MCF 10A (cell line): ENCODE measurements at regions of chr1 and their contacts with region 1.

Region 1: GRCh38 chr1:209815931-209816341 is 10.0 kb upstream of the IRF6 start:
- DNase-seq: peak; percentile 100
- H3K4me3 Mint-ChIP-seq: peak overlapping the region; percentile 44
- H3K27ac Mint-ChIP-seq: peak overlapping the region; percentile 91
- H3K4me1 Mint-ChIP-seq: peaks cover 29% of the 10 kb centered on the region
- H3K27me3 Mint-ChIP-seq: no peaks in the 10 kb centered on the region
- CTCF ChIP-seq: no peak

Region 2: GRCh38 chr1:208942394-208943130 is 873.4 kb before region 1 on chr1:
- CTCF ChIA-PET with region 1: no interaction called
- POLR2A ChIA-PET with region 1: no interaction called
- intact Hi-C with region 1: no loop called
- DNase-seq: peak; percentile 32
- H3K4me3 Mint-ChIP-seq: no peak overlapping the region
- H3K27ac Mint-ChIP-seq: no peak overlapping the region
- H3K4me1 Mint-ChIP-seq: no peaks in the 10 kb centered on the region
- H3K27me3 Mint-ChIP-seq: no peaks in the 10 kb centered on the region
- CTCF ChIP-seq: no peak

Region 3: GRCh38 chr1:209790286-209791193 is 25.4 kb before region 1 on chr1:
- CTCF ChIA-PET with region 1: interaction called, 263 read pairs
- POLR2A ChIA-PET with region 1: interaction called, 67 read pairs
- intact Hi-C with region 1: no loop called
- DNase-seq: peak; percentile 32
- H3K4me3 Mint-ChIP-seq: no peak overlapping the region
- H3K27ac Mint-ChIP-seq: no peak overlapping the region
- H3K4me1 Mint-ChIP-seq: peaks cover 6% of the 10 kb centered on the region
- H3K27me3 Mint-ChIP-seq: no peaks in the 10 kb centered on the region
- CTCF ChIP-seq: no peak

Region 4: GRCh38 chr1:209797978-209798639 is 17.8 kb before region 1 on chr1:
- CTCF ChIA-PET with region 1: interaction called, 263 read pairs
- POLR2A ChIA-PET with region 1: interaction called, 94 read pairs
- intact Hi-C with region 1: no loop called
- DNase-seq: peak; percentile 74
- H3K4me3 Mint-ChIP-seq: peak overlapping the region; percentile 17
- H3K27ac Mint-ChIP-seq: no peak overlapping the region
- H3K4me1 Mint-ChIP-seq: peaks cover 28% of the 10 kb centered on the region
- H3K27me3 Mint-ChIP-seq: no peaks in the 10 kb centered on the region
- CTCF ChIP-seq: no peak